ENCODE measurements at regions of chr14 and their contacts with region 1.

Region 1: GRCh38 chr14:89973234-89973823 is 17.6 kb downstream of the TDP1 start:
- DNase-seq: peak; percentile 72
- H3K4me3 Mint-ChIP-seq: no peak overlapping the region
- H3K27ac Mint-ChIP-seq: no peak overlapping the region
- H3K4me1 Mint-ChIP-seq: no peaks in the 10 kb centered on the region
- H3K27me3 Mint-ChIP-seq: no peaks in the 10 kb centered on the region
- CTCF ChIP-seq: peak; percentile 84

Region 2: GRCh38 chr14:89848165-89848564 is 125.2 kb before region 1 on chr14:
- CTCF ChIA-PET with region 1: no interaction called
- POLR2A ChIA-PET with region 1: no interaction called
- intact Hi-C with region 1: no loop called
- DNase-seq: no peak
- H3K4me3 Mint-ChIP-seq: no peak overlapping the region
- H3K27ac Mint-ChIP-seq: no peak overlapping the region
- H3K4me1 Mint-ChIP-seq: peaks cover 5% of the 10 kb centered on the region
- H3K27me3 Mint-ChIP-seq: no peaks in the 10 kb centered on the region
- CTCF ChIP-seq: peak; percentile 12

Region 3: DNA sequence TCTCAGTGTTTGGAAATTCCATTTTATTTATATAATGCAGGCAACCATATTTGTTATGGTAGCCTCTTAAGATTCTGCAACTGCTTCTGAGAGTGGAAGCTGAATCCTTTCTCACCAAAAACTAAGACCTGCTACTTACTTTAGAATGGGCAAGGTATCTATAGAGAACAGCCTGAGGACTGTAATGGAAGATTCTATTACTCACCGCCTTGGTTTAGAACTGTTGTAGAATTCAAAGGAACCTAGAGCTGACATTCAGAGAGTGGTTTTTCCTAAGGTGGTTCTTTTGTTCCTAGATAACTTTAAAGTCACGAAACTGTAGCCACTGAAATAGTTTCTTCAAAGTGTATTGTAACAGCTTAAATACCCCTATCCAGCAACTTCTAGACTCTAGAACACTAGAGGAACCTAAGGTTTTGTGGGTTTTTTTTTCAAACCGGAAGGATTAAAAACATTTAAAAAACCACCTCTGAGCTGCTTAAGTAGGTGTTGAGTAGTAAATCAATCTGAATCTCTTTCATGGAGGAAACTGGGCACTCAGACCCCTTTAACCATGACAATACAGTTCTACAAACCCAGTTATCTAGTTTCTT is 13.4 kb before region 1 on chr14:
- CTCF ChIA-PET with region 1: interaction called, 26 read pairs
- POLR2A ChIA-PET with region 1: interaction called, 3 read pairs
- intact Hi-C with region 1: no loop called
- DNase-seq: no peak
- H3K4me3 Mint-ChIP-seq: no peak overlapping the region
- H3K27ac Mint-ChIP-seq: no peak overlapping the region
- H3K4me1 Mint-ChIP-seq: peaks cover 18% of the 10 kb centered on the region
- H3K27me3 Mint-ChIP-seq: no peaks in the 10 kb centered on the region
- CTCF ChIP-seq: no peak

Region 4: GRCh38 chr14:89992273-89992672 is 18.9 kb after region 1 on chr14:
- CTCF ChIA-PET with region 1: interaction called, 75 read pairs
- POLR2A ChIA-PET with region 1: no interaction called
- intact Hi-C with region 1: no loop called
- DNase-seq: no peak
- H3K4me3 Mint-ChIP-seq: no peak overlapping the region
- H3K27ac Mint-ChIP-seq: no peak overlapping the region
- H3K4me1 Mint-ChIP-seq: no peaks in the 10 kb centered on the region
- H3K27me3 Mint-ChIP-seq: no peaks in the 10 kb centered on the region
- CTCF ChIP-seq: no peak

Region 5: DNA sequence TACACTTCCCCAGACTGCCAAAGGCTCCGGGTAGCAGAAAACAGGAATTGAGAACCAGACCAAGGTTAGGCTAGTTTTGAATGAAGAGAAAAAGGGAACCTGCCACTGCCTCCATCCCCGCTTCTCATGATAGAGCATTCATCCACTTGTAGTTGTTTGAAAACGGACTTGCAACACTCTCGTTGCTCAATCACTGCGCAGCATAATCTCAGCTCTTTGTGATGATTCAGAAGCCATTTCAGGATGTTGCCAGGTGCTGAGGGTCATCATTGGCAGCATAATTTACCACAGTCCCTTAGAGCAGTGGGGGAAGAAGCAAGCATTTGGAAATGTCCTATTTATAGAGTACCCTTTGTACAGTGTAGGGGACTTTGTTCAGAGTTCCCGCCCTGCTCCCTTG is 114.1 kb after region 1 on chr14:
- CTCF ChIA-PET with region 1: no interaction called
- POLR2A ChIA-PET with region 1: no interaction called
- intact Hi-C with region 1: no loop called
- DNase-seq: peak; percentile 97
- H3K4me3 Mint-ChIP-seq: no peak overlapping the region
- H3K27ac Mint-ChIP-seq: no peak overlapping the region
- H3K4me1 Mint-ChIP-seq: peaks cover 12% of the 10 kb centered on the region
- H3K27me3 Mint-ChIP-seq: no peaks in the 10 kb centered on the region
- CTCF ChIP-seq: no peak

Region 6: GRCh38 chr14:90235179-90235976 is 262.0 kb after region 1 on chr14:
- CTCF ChIA-PET with region 1: interaction called, 291 read pairs
- POLR2A ChIA-PET with region 1: interaction called, 8 read pairs
- intact Hi-C with region 1: loop called (anchors 1 kb)
- DNase-seq: peak; percentile 69
- H3K4me3 Mint-ChIP-seq: no peak overlapping the region
- H3K27ac Mint-ChIP-seq: no peak overlapping the region
- H3K4me1 Mint-ChIP-seq: no peaks in the 10 kb centered on the region
- H3K27me3 Mint-ChIP-seq: no peaks in the 10 kb centered on the region
- CTCF ChIP-seq: peak; percentile 95

Region 7: DNA sequence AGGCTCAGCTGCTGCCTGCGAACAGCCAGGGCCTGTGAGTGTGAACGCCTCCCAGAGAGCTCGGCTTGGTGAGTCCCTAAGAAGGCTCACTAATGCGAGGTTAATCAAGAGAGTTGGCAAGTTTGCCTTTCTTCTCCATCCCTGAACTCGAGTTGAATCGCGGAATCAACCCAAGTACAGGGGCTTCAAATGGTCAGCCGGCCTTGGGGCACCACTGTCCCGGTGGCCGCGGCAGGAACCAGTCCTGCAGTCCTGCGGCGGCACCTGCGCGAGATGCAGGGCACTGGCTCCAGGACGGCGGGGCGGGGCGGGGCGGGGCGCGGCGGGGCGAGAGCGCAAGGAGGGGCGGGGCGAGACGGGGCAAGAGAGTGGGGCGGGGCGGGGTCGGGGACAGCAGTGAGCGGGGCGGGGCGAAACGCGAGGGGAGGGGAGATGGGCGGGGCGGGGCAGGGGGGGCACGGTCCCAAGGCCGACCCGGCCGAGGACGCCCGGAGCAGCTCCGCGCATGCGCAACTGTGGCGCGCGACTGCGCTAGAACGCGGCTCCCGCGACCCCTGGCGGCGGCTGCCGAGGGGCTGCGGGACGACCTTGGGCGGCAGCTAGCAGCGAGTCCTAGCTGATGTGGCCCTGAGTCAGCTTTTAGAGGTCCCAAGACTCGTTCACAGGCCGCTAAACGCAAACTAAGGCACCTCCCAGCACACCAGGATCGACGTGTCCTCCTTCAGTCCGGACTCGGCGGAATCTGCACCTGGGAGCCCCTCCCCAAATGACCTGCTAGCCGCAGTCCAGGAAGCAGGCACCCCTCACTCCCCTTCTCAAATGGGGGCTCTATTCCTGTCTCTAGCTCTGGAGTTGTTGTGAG is 784.9 kb after region 1 on chr14:
- CTCF ChIA-PET with region 1: interaction called, 11 read pairs
- POLR2A ChIA-PET with region 1: no interaction called
- intact Hi-C with region 1: no loop called
- DNase-seq: peak; percentile 87
- H3K4me3 Mint-ChIP-seq: peak overlapping the region; percentile 72
- H3K27ac Mint-ChIP-seq: no peak overlapping the region
- H3K4me1 Mint-ChIP-seq: no peaks in the 10 kb centered on the region
- H3K27me3 Mint-ChIP-seq: no peaks in the 10 kb centered on the region
- CTCF ChIP-seq: peak; percentile 75

Measured in MCF 10A (cell line).